ENCODE measurements at regions of chr7 and their contacts with region 1.

Region 1: DNA sequence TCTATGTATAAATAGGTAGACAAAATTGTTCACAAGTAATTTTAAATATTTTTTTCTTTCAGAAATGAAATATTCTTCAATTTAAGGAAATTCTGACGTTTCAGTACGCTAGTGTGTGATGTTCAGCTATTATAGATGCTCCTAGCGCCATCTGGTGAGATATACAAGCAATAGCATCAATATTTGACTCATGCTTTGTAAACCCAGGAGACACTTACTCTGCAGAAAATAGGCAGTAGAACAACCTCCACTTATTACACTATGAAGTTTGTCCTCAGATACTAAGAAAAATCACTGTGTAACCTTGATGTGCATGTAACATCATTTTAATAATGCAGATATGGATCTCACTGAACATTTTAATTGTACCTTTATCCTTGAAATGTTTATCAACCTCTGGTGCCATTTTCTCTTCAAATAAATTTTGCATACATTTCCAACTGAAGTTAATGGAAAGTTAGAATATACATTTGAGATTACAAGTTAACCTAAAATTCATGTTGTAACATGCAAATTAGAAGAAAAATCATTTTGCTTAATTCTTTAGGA is 151.5 kb upstream of the FAM3C start:
- DNase-seq: no peak
- H3K4me3 ChIP-seq: no peak overlapping the region
- H3K27ac ChIP-seq: peak overlapping the region in 1 of 2 donors; percentile 88
- H3K4me1 ChIP-seq: no peaks in the 10 kb centered on the region
- H3K27me3 ChIP-seq: no peaks in the 10 kb centered on the region
- CTCF ChIP-seq: peak; percentile 76 to 90 (median 81)
- POLR2A ChIP-seq: no peak

Region 2: DNA sequence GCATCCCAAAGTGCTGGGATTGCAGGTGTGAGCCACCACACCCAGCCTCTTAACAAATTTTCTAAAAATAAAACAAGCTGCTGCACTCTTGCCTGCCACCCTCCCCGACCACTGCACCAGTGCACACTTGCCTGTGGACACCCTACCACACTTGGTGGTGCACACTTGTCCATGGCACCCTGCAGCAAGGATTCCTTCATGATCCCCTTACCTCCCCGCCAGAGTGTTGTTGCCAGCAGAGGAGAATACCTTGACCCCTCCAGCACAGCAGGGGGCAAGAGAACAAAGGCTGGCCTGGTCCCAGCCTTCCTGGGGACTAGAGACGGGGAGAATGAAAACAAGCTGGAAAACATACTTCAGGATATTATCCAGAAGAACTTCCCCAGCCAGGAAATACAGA is 1340.6 kb before region 1 on chr7:
- intact Hi-C with region 1: no loop called
- DNase-seq: no peak
- H3K4me3 ChIP-seq: no peak overlapping the region
- H3K27ac ChIP-seq: no peak overlapping the region
- H3K4me1 ChIP-seq: no peaks in the 10 kb centered on the region
- H3K27me3 ChIP-seq: no peaks in the 10 kb centered on the region
- CTCF ChIP-seq: no peak
- POLR2A ChIP-seq: no peak

Region 3: GRCh38 chr7:121366852-121367431 is 180.7 kb before region 1 on chr7:
- intact Hi-C with region 1: loop called (anchors 5 kb)
- DNase-seq: peak in 1 of 2 donors; percentile 24
- H3K4me3 ChIP-seq: no peak overlapping the region
- H3K27ac ChIP-seq: no peak overlapping the region
- H3K4me1 ChIP-seq: no peaks in the 10 kb centered on the region
- H3K27me3 ChIP-seq: no peaks in the 10 kb centered on the region
- CTCF ChIP-seq: peak; percentile 62 to 75 (median 70)
- POLR2A ChIP-seq: no peak

Region 4: GRCh38 chr7:121504478-121504877 is 43.1 kb before region 1 on chr7:
- intact Hi-C with region 1: no loop called
- DNase-seq: peak; percentile 34 to 47
- H3K4me3 ChIP-seq: no peak overlapping the region
- H3K27ac ChIP-seq: peak overlapping the region; percentile 66 to 67
- H3K4me1 ChIP-seq: no peaks in the 10 kb centered on the region
- H3K27me3 ChIP-seq: no peaks in the 10 kb centered on the region
- CTCF ChIP-seq: no peak
- POLR2A ChIP-seq: no peak

Measured in uterus (tissue), 4 donors.